CD4-positive, alpha-beta memory T cell (primary cell): ENCODE measurements at regions of chr1 and their contacts with region 1.

Region 1: GRCh38 chr1:19582302-19582701 is 61.8 kb upstream of the NBL1 start:
- DNase-seq: peak; percentile 56 to 74 (median 64)
- H3K4me3 ChIP-seq: no peak overlapping the region
- H3K4me3 Mint-ChIP-seq: no peak overlapping the region
- H3K27ac ChIP-seq: no peak overlapping the region
- H3K27ac Mint-ChIP-seq: peak overlapping the region in 2 of 7 donors; percentile 46 to 71
- H3K4me1 ChIP-seq: peaks cover 10% of the 10 kb centered on the region
- H3K4me1 Mint-ChIP-seq: peaks cover 7 to 15% (median 12%) of the 10 kb centered on the region in 4 donors
- H3K27me3 ChIP-seq: no peaks in the 10 kb centered on the region
- H3K27me3 Mint-ChIP-seq: no peaks in the 10 kb centered on the region

Region 2: DNA sequence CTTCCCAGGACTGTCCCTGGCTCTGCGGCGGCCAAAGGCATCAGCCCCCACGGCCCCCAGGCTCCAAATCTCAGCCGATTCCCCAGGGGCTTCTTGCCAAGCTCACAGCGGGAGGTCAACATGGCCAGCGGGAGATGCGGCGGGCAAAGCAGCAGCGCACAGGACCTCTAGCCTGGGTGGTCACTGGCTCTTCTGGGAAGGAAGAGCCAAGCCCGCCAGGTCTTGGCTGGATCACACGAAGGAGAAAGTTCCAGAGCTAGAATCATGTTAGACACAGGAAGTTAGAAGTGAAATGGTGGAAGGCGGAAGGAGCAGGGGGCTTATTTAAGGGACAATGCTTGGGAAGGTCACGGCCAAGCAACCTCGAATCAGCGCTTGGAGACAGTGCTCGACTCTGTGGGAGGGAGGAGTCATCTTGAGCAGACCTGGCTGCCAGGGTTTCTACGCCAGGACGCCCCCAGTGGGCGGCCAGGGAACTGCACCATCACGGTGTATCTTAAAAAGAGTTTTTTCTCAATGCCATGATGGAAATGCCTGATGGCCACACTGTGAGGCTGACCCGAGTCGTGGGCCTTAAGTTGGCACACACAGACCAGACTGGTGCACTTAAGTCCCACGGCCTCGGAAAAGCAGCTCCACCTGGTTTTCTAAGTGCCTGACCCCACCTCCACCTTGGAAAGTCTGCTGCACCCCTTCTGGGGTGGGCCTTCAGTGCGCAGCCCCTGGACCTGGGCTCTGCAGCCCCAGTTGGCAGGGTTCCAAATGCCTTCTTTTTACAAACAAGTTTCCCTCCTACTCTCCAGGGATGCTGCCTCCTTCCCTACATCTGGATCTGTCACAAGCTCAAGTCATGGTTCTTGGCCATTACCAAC is 240.9 kb before region 1 on chr1:
- CTCF ChIA-PET with region 1: interaction called, 15 read pairs
- POLR2A ChIA-PET with region 1: no interaction called
- intact Hi-C with region 1: no loop called
- DNase-seq: peak; percentile 64 to 71 (median 66)
- H3K4me3 ChIP-seq: no peak overlapping the region
- H3K4me3 Mint-ChIP-seq: peak overlapping the region in 1 of 8 donors; percentile 39
- H3K27ac ChIP-seq: no peak overlapping the region
- H3K27ac Mint-ChIP-seq: peak overlapping the region in 6 of 7 donors; percentile 62 to 95 (median 83)
- H3K4me1 ChIP-seq: no peaks in the 10 kb centered on the region
- H3K4me1 Mint-ChIP-seq: peaks cover 6 to 11% (median 7%) of the 10 kb centered on the region in 4 donors
- H3K27me3 ChIP-seq: no peaks in the 10 kb centered on the region
- H3K27me3 Mint-ChIP-seq: no peaks in the 10 kb centered on the region

Region 3: GRCh38 chr1:19390901-19391595 is 191.3 kb before region 1 on chr1:
- CTCF ChIA-PET with region 1: interaction called, 53 read pairs
- POLR2A ChIA-PET with region 1: interaction called, 9 read pairs
- intact Hi-C with region 1: loop called (anchors 1 kb)
- DNase-seq: peak; percentile 83 to 88 (median 86)
- H3K4me3 ChIP-seq: peak overlapping the region; percentile 34 to 46
- H3K4me3 Mint-ChIP-seq: peak overlapping the region; percentile 84 to 94 (median 87)
- H3K27ac ChIP-seq: peak overlapping the region; percentile 64
- H3K27ac Mint-ChIP-seq: peak overlapping the region; percentile 92 to 99 (median 96)
- H3K4me1 ChIP-seq: peaks cover 89% of the 10 kb centered on the region
- H3K4me1 Mint-ChIP-seq: peaks cover 56 to 95% (median 78%) of the 10 kb centered on the region in 4 donors
- H3K27me3 ChIP-seq: no peaks in the 10 kb centered on the region
- H3K27me3 Mint-ChIP-seq: no peaks in the 10 kb centered on the region

Region 4: DNA sequence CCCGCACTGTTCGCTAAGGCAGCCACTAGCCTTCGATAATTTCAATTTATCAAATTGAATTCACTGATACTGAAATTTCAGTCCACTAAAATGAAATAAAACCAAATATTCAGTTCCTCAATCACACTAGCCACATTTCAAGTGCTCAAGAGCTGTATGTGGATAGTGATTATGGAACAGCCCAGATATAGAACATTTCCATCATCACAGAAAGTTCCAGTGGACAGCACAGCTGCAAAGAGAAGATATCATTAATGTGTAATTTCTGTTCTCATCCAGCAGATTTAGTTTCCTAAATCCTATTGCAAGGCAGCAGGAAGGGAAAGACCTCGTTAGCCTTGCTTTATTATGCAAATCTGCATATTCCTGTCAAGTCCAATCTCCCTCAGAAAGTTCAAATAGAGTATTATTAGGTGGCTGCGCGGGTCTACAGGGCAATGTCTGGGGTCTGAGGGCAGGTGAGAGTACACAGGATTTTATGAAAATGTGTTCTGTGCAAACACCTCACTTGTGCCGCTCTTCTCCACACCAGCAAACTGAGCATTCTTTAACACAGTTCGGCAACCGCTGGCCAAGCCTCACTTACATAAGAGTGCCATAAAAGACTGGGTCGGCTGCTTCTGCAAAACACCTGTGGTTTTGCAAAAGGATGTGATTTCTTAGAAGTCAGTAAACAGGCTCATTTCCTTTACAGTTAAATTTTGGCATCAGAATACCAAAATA is 119.4 kb before region 1 on chr1:
- CTCF ChIA-PET with region 1: interaction called, 14 read pairs
- POLR2A ChIA-PET with region 1: interaction called, 4 read pairs
- intact Hi-C with region 1: no loop called
- DNase-seq: peak; percentile 78 to 88 (median 83)
- H3K4me3 ChIP-seq: peak overlapping the region; percentile 5 to 46
- H3K4me3 Mint-ChIP-seq: peak overlapping the region; percentile 81 to 93 (median 86)
- H3K27ac ChIP-seq: peak overlapping the region; percentile 71
- H3K27ac Mint-ChIP-seq: peak overlapping the region; percentile 90 to 96 (median 95)
- H3K4me1 ChIP-seq: peaks cover 99% of the 10 kb centered on the region
- H3K4me1 Mint-ChIP-seq: peaks cover 73 to 94% (median 82%) of the 10 kb centered on the region in 4 donors
- H3K27me3 ChIP-seq: no peaks in the 10 kb centered on the region
- H3K27me3 Mint-ChIP-seq: no peaks in the 10 kb centered on the region

Region 5: GRCh38 chr1:19514391-19514831 is 67.9 kb before region 1 on chr1:
- CTCF ChIA-PET with region 1: no interaction called
- POLR2A ChIA-PET with region 1: no interaction called
- intact Hi-C with region 1: no loop called
- DNase-seq: no peak
- H3K4me3 ChIP-seq: no peak overlapping the region
- H3K4me3 Mint-ChIP-seq: no peak overlapping the region
- H3K27ac ChIP-seq: no peak overlapping the region
- H3K27ac Mint-ChIP-seq: no peak overlapping the region
- H3K4me1 ChIP-seq: peaks cover under 1% of the 10 kb centered on the region
- H3K4me1 Mint-ChIP-seq: peaks cover 0 to 6% (median 2%) of the 10 kb centered on the region in 4 donors
- H3K27me3 ChIP-seq: no peaks in the 10 kb centered on the region
- H3K27me3 Mint-ChIP-seq: no peaks in the 10 kb centered on the region

Region 6: GRCh38 chr1:19563324-19564097 is 18.8 kb before region 1 on chr1:
- CTCF ChIA-PET with region 1: interaction called, 12 read pairs
- POLR2A ChIA-PET with region 1: no interaction called
- intact Hi-C with region 1: no loop called
- DNase-seq: no peak
- H3K4me3 ChIP-seq: no peak overlapping the region
- H3K4me3 Mint-ChIP-seq: no peak overlapping the region
- H3K27ac ChIP-seq: no peak overlapping the region
- H3K27ac Mint-ChIP-seq: no peak overlapping the region
- H3K4me1 ChIP-seq: peaks cover 9% of the 10 kb centered on the region
- H3K4me1 Mint-ChIP-seq: peaks cover 3 to 10% (median 5%) of the 10 kb centered on the region in 4 donors
- H3K27me3 ChIP-seq: no peaks in the 10 kb centered on the region
- H3K27me3 Mint-ChIP-seq: no peaks in the 10 kb centered on the region

Region 7: GRCh38 chr1:19661721-19662228 is 79.5 kb after region 1 on chr1:
- CTCF ChIA-PET with region 1: interaction called, 13 read pairs
- POLR2A ChIA-PET with region 1: no interaction called
- intact Hi-C with region 1: no loop called
- DNase-seq: peak in 4 of 5 donors; percentile 49 to 66 (median 60)
- H3K4me3 ChIP-seq: no peak overlapping the region
- H3K4me3 Mint-ChIP-seq: peak overlapping the region in 1 of 8 donors; percentile 54
- H3K27ac ChIP-seq: no peak overlapping the region
- H3K27ac Mint-ChIP-seq: peak overlapping the region in 2 of 7 donors; percentile 71 to 74
- H3K4me1 ChIP-seq: peaks cover 27% of the 10 kb centered on the region
- H3K4me1 Mint-ChIP-seq: peaks cover 18 to 43% (median 29%) of the 10 kb centered on the region in 4 donors
- H3K27me3 ChIP-seq: no peaks in the 10 kb centered on the region
- H3K27me3 Mint-ChIP-seq: peaks cover 0 to 18% of the 10 kb centered on the region in 2 donors

Region 8: DNA sequence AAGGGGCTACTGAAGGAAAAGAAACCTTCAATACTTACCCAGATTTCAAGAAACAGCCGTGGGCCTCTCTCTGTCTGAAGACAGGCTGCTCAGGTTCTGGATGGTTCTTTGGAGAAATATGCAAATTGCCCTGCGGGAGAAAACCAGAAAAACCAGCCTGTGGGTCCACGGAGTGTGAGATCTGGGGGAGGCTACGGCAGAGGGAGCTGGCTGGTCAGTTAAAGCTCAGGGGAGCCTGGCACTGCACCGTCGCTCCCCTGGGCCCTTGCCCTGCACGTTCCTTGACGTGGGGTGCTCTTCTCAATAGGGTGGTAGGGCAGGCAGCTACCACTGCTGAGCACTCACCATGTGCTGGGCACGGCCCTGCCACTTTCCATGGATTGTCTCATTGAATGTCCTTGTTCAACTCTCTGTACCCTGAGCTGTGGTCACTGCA is 204.7 kb after region 1 on chr1:
- CTCF ChIA-PET with region 1: no interaction called
- POLR2A ChIA-PET with region 1: no interaction called
- intact Hi-C with region 1: no loop called
- DNase-seq: no peak
- H3K4me3 ChIP-seq: no peak overlapping the region
- H3K4me3 Mint-ChIP-seq: no peak overlapping the region
- H3K27ac ChIP-seq: no peak overlapping the region
- H3K27ac Mint-ChIP-seq: no peak overlapping the region
- H3K4me1 ChIP-seq: peaks cover 12% of the 10 kb centered on the region
- H3K4me1 Mint-ChIP-seq: peaks cover 13 to 24% (median 16%) of the 10 kb centered on the region in 4 donors
- H3K27me3 ChIP-seq: no peaks in the 10 kb centered on the region
- H3K27me3 Mint-ChIP-seq: no peaks in the 10 kb centered on the region